HCT116 (cell line): ENCODE measurements at regions of chr17 and their contacts with region 1.

Region 1: GRCh38 chr17:72592242-72592966 is 471.6 kb downstream of the SOX9 start:
- DNase-seq: peak; percentile 86
- ATAC-seq: peak; percentile 76
- H3K4me3 ChIP-seq: peak overlapping the region; percentile 81 to 87
- H3K27ac ChIP-seq: peak overlapping the region; percentile 69
- H3K4me1 ChIP-seq: peaks cover 38 to 64% of the 10 kb centered on the region in 2 experiments
- H3K27me3 ChIP-seq: no peaks in the 10 kb centered on the region
- CTCF ChIP-seq: 0 out of 6 replicates have a peak, but pooled peaks of 1 of the 3 experiments have one; percentile 0
- POLR2A ChIP-seq: peak; percentile 99
- RAD21 ChIP-seq: no peak

Region 2: GRCh38 chr17:72580321-72581127 is 11.9 kb before region 1 on chr17:
- CTCF ChIA-PET with region 1: interaction called, 6 read pairs
- POLR2A ChIA-PET with region 1: interaction called, 42 read pairs
- RAD21 ChIA-PET with region 1: no interaction called
- intact Hi-C with region 1: no loop called
- DNase-seq: no peak
- ATAC-seq: peak; percentile 65
- H3K4me3 ChIP-seq: no peak overlapping the region
- H3K27ac ChIP-seq: no peak overlapping the region
- H3K4me1 ChIP-seq: peaks cover 9 to 44% of the 10 kb centered on the region in 2 experiments; a peak in 2 of 4 replicates
- H3K27me3 ChIP-seq: no peaks in the 10 kb centered on the region
- CTCF ChIP-seq: no peak
- POLR2A ChIP-seq: no peak
- RAD21 ChIP-seq: no peak

Region 3: DNA sequence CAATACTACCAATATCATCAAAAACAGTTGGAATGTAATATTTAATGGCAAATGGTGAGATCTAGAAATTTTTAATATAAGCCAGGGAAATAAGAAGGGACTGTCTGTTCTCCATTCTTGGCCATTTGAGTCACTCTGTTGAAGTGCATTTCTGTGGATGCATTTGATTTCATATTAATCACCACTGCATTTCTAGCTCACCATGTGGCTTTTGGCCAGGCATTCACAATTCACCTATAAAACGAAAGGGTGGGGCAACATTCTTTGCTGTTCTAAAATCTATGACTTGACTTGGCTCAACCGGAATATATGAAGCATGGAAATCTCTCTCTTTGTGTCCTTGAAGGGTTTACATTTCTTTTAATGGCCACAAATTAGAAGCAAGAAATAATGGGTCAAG is 17.1 kb after region 1 on chr17:
- CTCF ChIA-PET with region 1: interaction called, 10 read pairs
- POLR2A ChIA-PET with region 1: interaction called, 77 read pairs
- RAD21 ChIA-PET with region 1: interaction called in 1 of 2 experiments, 3 read pairs
- intact Hi-C with region 1: no loop called
- DNase-seq: peak; percentile 86
- ATAC-seq: peak; percentile 66
- H3K4me3 ChIP-seq: peak overlapping the region in 1 of 2 experiments; percentile 1; a peak in 2 of 4 replicates
- H3K27ac ChIP-seq: peak overlapping the region; percentile 48; the same call in 1 of the 2 replicates
- H3K4me1 ChIP-seq: peaks cover 29 to 58% of the 10 kb centered on the region in 2 experiments
- H3K27me3 ChIP-seq: no peaks in the 10 kb centered on the region
- CTCF ChIP-seq: no peak
- POLR2A ChIP-seq: no peak
- RAD21 ChIP-seq: peak; percentile 34; the same call in 1 of the 2 replicates

Region 4: DNA sequence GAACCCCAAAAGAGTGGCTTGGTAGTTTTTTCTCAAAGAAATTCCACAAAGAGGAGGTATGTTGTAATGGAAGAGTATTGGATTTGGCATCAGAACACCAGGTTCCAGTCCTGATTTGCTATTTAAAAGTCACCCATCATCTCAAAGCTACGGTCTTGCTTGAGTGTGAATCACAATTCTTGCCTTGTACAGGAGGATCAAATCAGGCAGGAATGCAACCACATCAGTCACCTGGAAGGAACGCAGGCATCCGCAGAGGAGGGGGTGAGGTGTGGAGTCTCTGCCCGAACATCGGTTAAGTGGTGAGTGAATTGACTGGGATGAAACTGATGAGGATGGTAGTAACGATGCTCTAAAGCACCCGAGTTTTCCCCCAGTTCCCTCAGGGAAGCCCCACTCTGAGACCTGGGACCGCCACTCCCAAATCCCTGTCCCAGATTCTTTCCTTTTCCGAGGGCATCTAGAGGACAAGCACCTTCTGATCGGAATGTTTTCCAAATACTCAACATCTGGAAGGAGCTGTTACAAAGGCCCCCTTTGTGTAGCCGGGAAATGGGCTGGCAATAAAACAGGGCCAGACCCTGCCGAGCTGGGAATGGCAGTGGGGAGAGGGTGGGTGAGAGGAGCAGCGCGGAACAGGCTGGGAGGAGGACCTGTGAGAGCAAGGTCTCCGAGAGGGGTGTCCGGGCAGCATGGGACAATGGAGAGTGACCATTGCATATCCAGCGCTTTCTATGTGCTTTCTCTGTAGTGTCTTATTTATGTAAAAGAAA is 30.4 kb after region 1 on chr17:
- CTCF ChIA-PET with region 1: no interaction called
- POLR2A ChIA-PET with region 1: interaction called, 11 read pairs
- RAD21 ChIA-PET with region 1: interaction called, 3 read pairs
- intact Hi-C with region 1: no loop called
- DNase-seq: peak; percentile 83
- ATAC-seq: peak; percentile 82
- H3K4me3 ChIP-seq: peak overlapping the region in 1 of 2 experiments; percentile 38; a peak in 2 of 4 replicates
- H3K27ac ChIP-seq: peak overlapping the region; percentile 23
- H3K4me1 ChIP-seq: peaks cover 33 to 44% of the 10 kb centered on the region in 2 experiments
- H3K27me3 ChIP-seq: no peaks in the 10 kb centered on the region
- CTCF ChIP-seq: no peak
- POLR2A ChIP-seq: no peak
- RAD21 ChIP-seq: no peak

Region 5: GRCh38 chr17:72671016-72671415 is 78.6 kb after region 1 on chr17:
- CTCF ChIA-PET with region 1: no interaction called
- POLR2A ChIA-PET with region 1: interaction called, 10 read pairs
- RAD21 ChIA-PET with region 1: no interaction called
- intact Hi-C with region 1: no loop called
- DNase-seq: no peak
- ATAC-seq: no peak
- H3K4me3 ChIP-seq: no peak overlapping the region
- H3K27ac ChIP-seq: no peak overlapping the region
- H3K4me1 ChIP-seq: peaks cover 0 to 13% of the 10 kb centered on the region in 2 experiments; a peak in 1 of 4 replicates
- H3K27me3 ChIP-seq: no peaks in the 10 kb centered on the region
- CTCF ChIP-seq: no peak
- POLR2A ChIP-seq: no peak
- RAD21 ChIP-seq: no peak

Region 6: GRCh38 chr17:72715906-72716572 is 123.6 kb after region 1 on chr17:
- CTCF ChIA-PET with region 1: interaction called, 3 read pairs
- POLR2A ChIA-PET with region 1: interaction called, 29 read pairs
- RAD21 ChIA-PET with region 1: interaction called, 3 read pairs
- intact Hi-C with region 1: loop called (anchors 1 kb)
- DNase-seq: peak; percentile 100
- ATAC-seq: peak; percentile 87
- H3K4me3 ChIP-seq: peak overlapping the region in 1 of 2 experiments; percentile 33; a peak in 2 of 4 replicates
- H3K27ac ChIP-seq: peak overlapping the region; percentile 82
- H3K4me1 ChIP-seq: peaks cover 46 to 64% of the 10 kb centered on the region in 2 experiments
- H3K27me3 ChIP-seq: no peaks in the 10 kb centered on the region
- CTCF ChIP-seq: no peak
- POLR2A ChIP-seq: no peak
- RAD21 ChIP-seq: peak; percentile 62

Region 7: GRCh38 chr17:73291260-73291801 is 698.9 kb after region 1 on chr17:
- CTCF ChIA-PET with region 1: no interaction called
- POLR2A ChIA-PET with region 1: no interaction called
- RAD21 ChIA-PET with region 1: interaction called in 1 of 2 experiments, 3 read pairs
- intact Hi-C with region 1: loop called (anchors 5 kb)
- DNase-seq: peak; percentile 79
- ATAC-seq: peak; percentile 83
- H3K4me3 ChIP-seq: peak overlapping the region; percentile 38 to 50
- H3K27ac ChIP-seq: peak overlapping the region; percentile 94
- H3K4me1 ChIP-seq: peaks cover 82 to 91% of the 10 kb centered on the region in 2 experiments
- H3K27me3 ChIP-seq: no peaks in the 10 kb centered on the region
- CTCF ChIP-seq: no peak
- POLR2A ChIP-seq: no peak
- RAD21 ChIP-seq: no peak